ENCODE measurements at regions of chr14 and their contacts with region 1.

Region 1: DNA sequence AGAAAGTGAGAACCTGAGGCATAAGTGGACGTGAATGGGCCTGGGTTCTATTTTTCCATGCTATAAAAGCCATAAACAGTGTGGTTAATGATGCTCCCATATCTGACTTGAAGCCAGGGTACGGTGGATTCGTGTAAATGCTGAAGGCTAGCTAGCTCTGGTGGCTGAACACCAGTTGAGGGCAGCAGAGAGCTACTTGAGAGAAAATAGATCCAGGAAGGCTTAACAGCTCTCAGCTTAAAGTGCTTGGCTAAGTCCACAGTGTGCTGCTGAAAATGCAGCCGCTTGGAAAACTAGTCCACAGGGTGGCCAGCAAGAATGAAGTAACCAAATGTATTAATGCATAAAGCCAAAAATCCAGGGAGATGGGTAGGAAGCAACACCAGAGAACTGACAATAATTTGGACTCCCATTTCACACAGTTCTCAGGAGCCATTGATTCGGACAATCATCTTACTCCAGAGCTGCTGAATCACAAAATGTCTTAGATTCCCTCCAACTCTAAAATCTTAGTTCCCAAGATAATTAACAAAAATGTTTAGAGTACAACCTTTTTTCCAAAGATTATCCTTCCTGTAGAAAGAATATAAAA is 15.0 kb upstream of the FOXG1 start:
- DNase-seq: peak; percentile 74
- H3K4me3 ChIP-seq: no peak overlapping the region
- H3K27ac ChIP-seq: no peak overlapping the region
- H3K4me1 ChIP-seq: no peaks in the 10 kb centered on the region
- H3K27me3 ChIP-seq: peaks cover 23% of the 10 kb centered on the region
- CTCF ChIP-seq: peak; percentile 75

Region 2: GRCh38 chr14:29536886-29537511 is 785.4 kb after region 1 on chr14:
- CTCF ChIA-PET with region 1: interaction called, 3 read pairs
- POLR2A ChIA-PET with region 1: no interaction called
- intact Hi-C with region 1: loop called (anchors 1 kb)
- DNase-seq: peak; percentile 21
- H3K4me3 ChIP-seq: no peak overlapping the region
- H3K27ac ChIP-seq: no peak overlapping the region
- H3K4me1 ChIP-seq: no peaks in the 10 kb centered on the region
- H3K27me3 ChIP-seq: no peaks in the 10 kb centered on the region
- CTCF ChIP-seq: peak; percentile 69

Region 3: GRCh38 chr14:30005114-30005808 is 1253.7 kb after region 1 on chr14:
- CTCF ChIA-PET with region 1: no interaction called
- POLR2A ChIA-PET with region 1: no interaction called
- intact Hi-C with region 1: loop called (anchors 10 kb)
- DNase-seq: peak; percentile 77
- H3K4me3 ChIP-seq: no peak overlapping the region
- H3K27ac ChIP-seq: no peak overlapping the region
- H3K4me1 ChIP-seq: peaks cover 21% of the 10 kb centered on the region
- H3K27me3 ChIP-seq: no peaks in the 10 kb centered on the region
- CTCF ChIP-seq: peak; percentile 81

Region 4: GRCh38 chr14:30214461-30215090 is 1463.0 kb after region 1 on chr14:
- CTCF ChIA-PET with region 1: interaction called, 3 read pairs
- POLR2A ChIA-PET with region 1: no interaction called
- intact Hi-C with region 1: loop called (anchors 2 kb)
- DNase-seq: peak; percentile 72
- H3K4me3 ChIP-seq: no peak overlapping the region
- H3K27ac ChIP-seq: no peak overlapping the region
- H3K4me1 ChIP-seq: no peaks in the 10 kb centered on the region
- H3K27me3 ChIP-seq: peaks cover 3% of the 10 kb centered on the region
- CTCF ChIP-seq: peak; percentile 76

Region 5: DNA sequence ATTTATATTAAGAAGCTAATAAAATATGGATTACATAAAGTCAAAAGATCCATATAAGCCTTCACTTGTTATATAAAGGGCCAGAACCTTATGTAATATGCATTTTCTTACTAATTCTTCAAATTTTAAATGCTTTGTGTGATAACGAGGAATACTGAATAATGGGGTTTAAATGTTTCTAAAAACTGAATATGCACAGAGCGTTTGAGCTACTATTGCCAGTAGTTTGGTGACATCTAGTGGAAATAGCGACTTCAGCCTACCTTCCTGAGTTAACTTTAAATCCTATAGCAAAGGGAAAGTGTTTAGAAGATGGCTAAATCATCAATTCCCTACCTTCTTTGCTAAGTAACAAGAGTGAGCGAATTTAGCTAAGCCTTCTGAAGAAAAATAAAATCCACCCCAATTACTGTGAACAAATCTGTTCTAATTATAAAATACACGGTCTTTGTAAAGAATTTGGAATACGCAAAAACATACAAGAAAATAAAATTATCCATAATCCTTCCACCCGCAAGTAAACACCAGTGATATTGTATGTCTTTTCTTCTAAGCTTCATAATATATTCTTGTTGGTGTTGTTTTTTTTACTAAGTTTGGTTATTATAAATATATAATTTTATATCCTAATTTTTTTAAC is 1691.9 kb after region 1 on chr14:
- CTCF ChIA-PET with region 1: no interaction called
- POLR2A ChIA-PET with region 1: no interaction called
- intact Hi-C with region 1: loop called (anchors 5 kb)
- DNase-seq: peak; percentile 59
- H3K4me3 ChIP-seq: no peak overlapping the region
- H3K27ac ChIP-seq: no peak overlapping the region
- H3K4me1 ChIP-seq: no peaks in the 10 kb centered on the region
- H3K27me3 ChIP-seq: peaks cover 39% of the 10 kb centered on the region
- CTCF ChIP-seq: peak; percentile 69

Region 6: DNA sequence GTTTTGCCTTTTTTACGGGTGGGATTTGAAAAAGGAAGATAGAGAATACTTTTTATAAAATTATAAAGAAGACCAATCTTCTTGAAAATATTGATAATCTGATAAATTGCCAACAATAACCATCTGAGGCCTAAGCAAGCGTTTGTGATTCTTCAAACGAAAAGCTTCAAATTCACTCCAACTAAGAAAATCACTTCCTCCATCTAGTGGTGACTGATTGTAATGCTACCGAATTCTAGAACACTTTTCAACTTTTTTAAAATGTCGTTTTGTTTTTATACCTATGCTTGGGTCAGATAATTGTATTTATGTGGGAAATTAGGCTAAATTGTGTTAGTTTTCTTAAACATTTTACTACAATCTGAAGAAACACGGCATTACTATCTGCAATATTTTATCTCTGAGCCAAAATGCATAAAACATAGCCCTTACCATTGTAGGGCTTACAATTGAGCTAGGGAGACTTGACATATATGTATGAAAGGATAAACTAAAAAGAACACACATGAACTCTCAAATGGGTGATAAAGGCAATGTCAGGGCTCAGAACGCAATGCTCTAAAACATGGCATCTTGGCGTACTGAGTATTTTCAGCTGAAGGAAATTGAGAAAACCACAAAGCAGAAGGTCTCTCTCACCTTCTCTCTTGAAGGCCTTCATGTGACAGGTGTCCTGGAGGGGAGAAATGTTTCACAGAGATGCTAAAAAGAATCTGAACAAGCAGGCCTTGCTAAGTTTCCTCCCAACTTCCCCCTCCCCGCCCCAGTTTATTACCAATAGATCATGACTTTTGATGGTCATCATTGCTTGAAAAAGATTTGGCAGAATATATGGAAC is 1770.6 kb after region 1 on chr14:
- CTCF ChIA-PET with region 1: no interaction called
- POLR2A ChIA-PET with region 1: no interaction called
- intact Hi-C with region 1: loop called (anchors 10 kb)
- DNase-seq: peak; percentile 46
- H3K4me3 ChIP-seq: no peak overlapping the region
- H3K27ac ChIP-seq: no peak overlapping the region
- H3K4me1 ChIP-seq: no peaks in the 10 kb centered on the region
- H3K27me3 ChIP-seq: peaks cover 6% of the 10 kb centered on the region
- CTCF ChIP-seq: peak; percentile 77

Measured in A673 (cell line).